ENCODE measurements at regions of chr1 and their contacts with region 1.

Region 1: DNA sequence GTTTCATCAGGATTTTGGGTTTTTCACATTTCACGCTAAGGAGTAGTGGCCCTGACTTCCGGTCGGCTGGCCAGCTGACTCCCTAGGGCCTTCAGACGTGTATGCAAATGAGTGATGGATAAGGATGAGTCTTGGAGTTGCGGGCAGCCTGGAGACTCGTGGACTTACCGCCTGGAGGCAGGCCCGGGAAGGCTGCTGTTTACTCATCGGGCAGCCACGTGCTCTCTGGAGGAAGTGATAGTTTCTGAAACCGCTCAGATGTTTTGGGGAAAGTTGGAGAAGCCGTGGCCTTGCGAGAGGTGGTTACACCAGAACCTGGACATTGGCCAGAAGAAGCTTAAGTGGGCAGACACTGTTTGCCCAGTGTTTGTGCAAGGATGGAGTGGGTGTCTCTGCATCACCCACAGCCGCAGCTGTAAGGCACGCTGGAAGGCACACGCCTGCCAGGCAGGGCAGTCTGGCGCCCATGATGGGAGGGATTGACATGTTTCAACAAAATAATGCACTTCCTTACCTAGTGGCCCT is 23.1 kb upstream of the TNFRSF1B start:
- DNase-seq: peak; percentile 89
- ATAC-seq: peak; percentile 81
- H3K4me3 ChIP-seq: no peak overlapping the region
- H3K27ac ChIP-seq: peak overlapping the region; percentile 75
- H3K4me1 ChIP-seq: peaks cover 57% of the 10 kb centered on the region
- H3K27me3 ChIP-seq: no peaks in the 10 kb centered on the region
- CTCF ChIP-seq: peak; percentile 5

Region 2: DNA sequence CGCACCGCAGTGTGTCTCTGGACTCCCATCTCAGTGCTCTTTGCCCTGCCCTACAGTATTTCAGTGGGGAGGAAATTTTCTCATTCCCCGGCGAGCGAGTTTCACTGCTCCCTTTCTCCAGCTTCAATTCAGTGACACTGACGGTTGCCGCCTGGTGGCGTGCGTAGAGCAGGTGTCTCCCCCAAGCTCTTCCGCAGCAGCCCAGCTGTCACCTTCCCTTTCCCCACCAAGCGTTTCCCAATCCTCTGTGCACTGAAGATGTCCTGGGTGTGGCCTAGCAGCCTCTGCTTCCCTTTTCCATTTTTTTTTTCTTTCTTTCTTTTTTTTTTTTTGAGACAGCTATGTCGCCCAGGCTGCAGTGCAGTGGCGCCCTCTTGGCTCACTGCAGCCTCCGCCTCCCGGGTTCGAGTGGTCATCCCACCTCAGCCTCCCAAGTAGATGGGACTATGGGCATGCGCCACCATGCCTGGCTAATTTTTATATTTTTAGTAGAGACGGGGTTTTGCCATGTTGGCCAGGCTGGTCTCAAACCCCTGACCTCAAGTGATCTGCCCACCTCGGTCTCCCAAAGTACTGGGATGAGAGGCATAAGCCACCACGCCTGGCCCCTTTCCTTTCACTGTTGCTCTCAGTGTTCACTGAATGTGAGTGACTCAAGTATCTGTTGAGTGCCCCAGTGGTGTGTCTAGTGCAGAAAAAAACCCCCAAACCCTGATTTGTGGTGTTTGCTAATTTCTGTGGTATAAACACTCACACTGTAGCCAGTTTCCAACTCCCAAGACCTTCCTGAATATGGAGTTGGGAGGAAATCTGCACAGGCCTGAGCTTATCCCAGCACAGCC is 53.2 kb after region 1 on chr1:
- intact Hi-C with region 1: loop called (anchors 10 kb)
- DNase-seq: peak; percentile 80
- ATAC-seq: peak; percentile 88
- H3K4me3 ChIP-seq: no peak overlapping the region
- H3K27ac ChIP-seq: no peak overlapping the region
- H3K4me1 ChIP-seq: peaks cover 10% of the 10 kb centered on the region
- H3K27me3 ChIP-seq: no peaks in the 10 kb centered on the region
- CTCF ChIP-seq: peak; percentile 27

Measured in upper lobe of right lung (tissue), 1 donor.